WTC11 (cell line): ENCODE measurements at regions of chr2 and their contacts with region 1.

Region 1: GRCh38 chr2:72973566-72974435 is 56.5 kb downstream of the EMX1 start:
- DNase-seq: peak; percentile 78
- ATAC-seq: peak; percentile 95
- H3K4me3 Mint-ChIP-seq: no peak overlapping the region
- H3K27ac Mint-ChIP-seq: no peak overlapping the region
- H3K4me1 Mint-ChIP-seq: peaks cover 46% of the 10 kb centered on the region
- H3K27me3 Mint-ChIP-seq: no peaks in the 10 kb centered on the region
- CTCF ChIP-seq: peak; percentile 81

Region 2: GRCh38 chr2:72833084-72833709 is 140.6 kb before region 1 on chr2:
- CTCF ChIA-PET with region 1: no interaction called
- POLR2A ChIA-PET with region 1: no interaction called
- DNase-seq: no peak
- ATAC-seq: peak; percentile 47
- H3K4me3 Mint-ChIP-seq: no peak overlapping the region
- H3K27ac Mint-ChIP-seq: no peak overlapping the region
- H3K4me1 Mint-ChIP-seq: peaks cover 8% of the 10 kb centered on the region
- H3K27me3 Mint-ChIP-seq: peaks cover 8% of the 10 kb centered on the region; the same call in 1 of the 2 replicates
- CTCF ChIP-seq: no peak

Region 3: DNA sequence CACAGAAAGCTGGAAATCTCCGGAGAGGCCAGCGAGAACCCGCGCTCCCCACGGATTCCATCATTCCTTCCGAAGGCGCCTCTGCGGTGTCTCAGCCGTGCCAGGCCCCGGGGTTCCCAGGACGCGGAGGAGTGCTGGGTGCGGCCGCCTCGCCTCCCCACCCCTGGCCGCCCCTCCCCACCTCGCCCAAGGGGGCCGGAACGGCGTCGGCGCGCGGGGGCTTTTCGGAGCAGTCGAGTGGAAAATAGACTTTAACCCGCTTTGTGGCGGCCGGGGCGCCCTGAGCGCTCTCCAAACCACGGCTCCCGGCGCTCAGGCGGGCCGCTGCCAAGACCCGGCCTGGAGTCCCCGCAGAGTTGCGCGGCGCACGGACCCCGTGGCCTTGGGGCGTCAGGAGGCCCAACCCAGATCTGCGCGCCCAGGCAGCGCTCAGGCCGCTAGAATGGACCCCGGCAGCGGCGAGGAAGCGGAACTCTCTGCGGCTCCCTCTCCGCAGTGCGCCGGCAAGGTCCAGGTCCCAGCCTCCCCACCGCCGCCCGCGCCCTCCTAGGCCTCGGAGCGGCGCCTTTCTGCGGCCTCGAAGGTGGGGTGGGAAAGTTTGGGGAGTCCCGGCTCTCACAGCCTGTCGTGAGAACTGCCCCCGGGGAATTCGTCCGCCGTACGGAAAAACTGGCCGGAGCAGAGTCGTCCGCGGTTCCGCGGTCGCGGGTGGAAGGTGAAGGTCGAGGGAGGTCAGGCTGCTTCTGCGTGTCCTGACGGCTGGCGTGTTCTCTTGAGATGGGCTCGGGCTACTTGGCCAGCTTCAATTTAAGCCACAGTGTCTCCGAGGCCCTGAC is 57.7 kb before region 1 on chr2:
- CTCF ChIA-PET with region 1: interaction called, 44 read pairs
- POLR2A ChIA-PET with region 1: interaction called, 3 read pairs
- DNase-seq: peak; percentile 84
- ATAC-seq: peak; percentile 32
- H3K4me3 Mint-ChIP-seq: peak overlapping the region; percentile 84
- H3K27ac Mint-ChIP-seq: no peak overlapping the region
- H3K4me1 Mint-ChIP-seq: peaks cover 43% of the 10 kb centered on the region
- H3K27me3 Mint-ChIP-seq: peaks cover 61% of the 10 kb centered on the region
- CTCF ChIP-seq: no peak

Region 4: DNA sequence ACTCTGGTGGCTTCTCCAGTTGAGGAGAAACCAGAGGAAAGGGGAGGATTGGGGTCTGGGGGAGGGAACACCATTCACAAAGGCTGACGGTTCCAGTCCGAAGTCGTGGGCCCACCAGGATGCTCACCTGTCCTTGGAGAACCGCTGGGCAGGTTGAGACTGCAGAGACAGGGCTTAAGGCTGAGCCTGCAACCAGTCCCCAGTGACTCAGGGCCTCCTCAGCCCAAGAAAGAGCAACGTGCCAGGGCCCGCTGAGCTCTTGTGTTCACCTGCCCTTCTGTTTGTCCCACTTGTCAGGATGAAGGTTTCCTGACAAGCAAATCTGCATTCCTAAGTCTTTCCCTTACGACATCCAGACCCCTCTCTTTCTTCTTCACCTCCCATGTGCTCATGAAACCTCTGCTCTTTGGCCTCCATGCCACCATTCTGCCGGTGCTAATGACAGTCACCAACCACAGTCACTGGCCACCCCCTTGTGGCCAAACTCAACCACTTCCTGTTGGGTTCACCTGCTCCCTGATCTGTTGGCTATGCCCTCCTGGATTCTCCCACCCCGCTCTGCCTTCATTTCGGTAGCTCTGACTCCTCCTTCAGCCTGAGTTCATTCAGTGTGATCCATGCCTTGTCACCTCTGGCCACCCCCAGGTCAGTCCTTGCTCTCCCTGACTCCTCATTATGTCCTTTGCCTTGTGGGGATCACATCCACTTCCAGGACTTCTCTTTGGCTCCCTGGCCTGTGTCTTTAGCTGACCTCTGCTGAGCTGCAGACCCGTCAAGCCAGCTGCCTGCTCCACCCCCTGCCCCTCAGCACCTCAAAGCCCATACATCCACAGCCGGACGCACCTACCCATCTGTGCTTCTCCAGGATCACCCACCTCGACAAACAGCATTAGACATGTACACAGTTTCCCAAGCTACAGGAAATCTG is 38.9 kb before region 1 on chr2:
- CTCF ChIA-PET with region 1: interaction called, 25 read pairs
- POLR2A ChIA-PET with region 1: no interaction called
- DNase-seq: peak; percentile 54
- ATAC-seq: peak; percentile 53
- H3K4me3 Mint-ChIP-seq: no peak overlapping the region
- H3K27ac Mint-ChIP-seq: no peak overlapping the region
- H3K4me1 Mint-ChIP-seq: peaks cover 39% of the 10 kb centered on the region
- H3K27me3 Mint-ChIP-seq: peaks cover 52% of the 10 kb centered on the region
- CTCF ChIP-seq: no peak; the same call in 1 of the 2 replicates

Region 5: GRCh38 chr2:72953976-72954375 is 19.8 kb before region 1 on chr2:
- CTCF ChIA-PET with region 1: interaction called, 52 read pairs
- POLR2A ChIA-PET with region 1: interaction called, 5 read pairs
- DNase-seq: no peak
- ATAC-seq: no peak
- H3K4me3 Mint-ChIP-seq: no peak overlapping the region
- H3K27ac Mint-ChIP-seq: no peak overlapping the region
- H3K4me1 Mint-ChIP-seq: peaks cover 51% of the 10 kb centered on the region
- H3K27me3 Mint-ChIP-seq: no peaks in the 10 kb centered on the region
- CTCF ChIP-seq: no peak

Region 6: DNA sequence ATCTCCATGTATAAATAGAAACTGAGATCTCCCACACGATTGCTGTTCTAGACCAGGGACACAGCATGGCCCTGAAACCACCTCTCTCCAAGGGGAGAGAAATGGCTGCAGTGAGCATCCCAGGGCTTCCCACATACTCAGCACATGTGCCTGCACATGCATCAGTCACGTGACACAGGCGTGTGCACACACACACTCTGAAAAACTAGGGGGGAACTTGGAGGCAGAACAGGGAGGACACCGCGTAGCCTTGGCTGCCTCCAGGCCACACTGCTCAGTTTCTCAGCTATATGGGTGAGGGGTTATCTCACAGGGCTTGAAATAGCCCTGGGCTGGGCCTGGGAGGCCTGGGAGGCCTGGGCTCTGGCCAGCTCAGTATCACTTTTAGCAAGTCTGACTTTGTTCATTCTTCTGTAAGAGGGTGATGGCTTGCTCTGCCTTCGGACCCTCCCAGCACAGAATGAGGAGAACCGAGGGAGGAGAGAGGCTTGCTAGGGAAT is 10.4 kb after region 1 on chr2:
- CTCF ChIA-PET with region 1: interaction called, 12 read pairs
- POLR2A ChIA-PET with region 1: no interaction called
- DNase-seq: no peak
- ATAC-seq: no peak
- H3K4me3 Mint-ChIP-seq: no peak overlapping the region
- H3K27ac Mint-ChIP-seq: peak overlapping the region; percentile 39; the same call in 1 of the 2 replicates
- H3K4me1 Mint-ChIP-seq: peaks cover 13% of the 10 kb centered on the region
- H3K27me3 Mint-ChIP-seq: no peaks in the 10 kb centered on the region
- CTCF ChIP-seq: no peak

Region 7: DNA sequence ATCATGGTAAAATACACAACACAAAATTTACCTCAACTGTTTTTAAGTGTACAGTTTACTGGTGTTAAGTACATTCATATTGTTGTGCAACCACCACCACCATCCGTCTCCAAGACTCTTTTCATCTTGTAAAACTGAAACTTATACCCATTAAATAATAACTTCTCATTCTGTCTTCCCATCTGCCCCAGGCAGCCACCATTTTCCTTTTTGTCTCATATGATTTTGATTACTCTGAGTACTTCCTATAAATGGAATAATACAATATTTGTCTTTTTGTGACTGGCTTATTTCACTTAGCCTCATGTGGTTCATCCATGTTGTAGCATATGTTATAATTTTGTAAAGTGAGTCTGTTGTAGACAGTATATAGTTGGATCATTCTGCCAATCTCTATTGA is 494.6 kb after region 1 on chr2:
- CTCF ChIA-PET with region 1: no interaction called
- POLR2A ChIA-PET with region 1: no interaction called
- DNase-seq: no peak
- ATAC-seq: no peak
- H3K4me3 Mint-ChIP-seq: no peak overlapping the region
- H3K27ac Mint-ChIP-seq: no peak overlapping the region
- H3K4me1 Mint-ChIP-seq: no peaks in the 10 kb centered on the region
- H3K27me3 Mint-ChIP-seq: no peaks in the 10 kb centered on the region; the same call in 1 of the 2 replicates
- CTCF ChIP-seq: no peak